WTC11 (cell line): ENCODE measurements at regions of chr20 and their contacts with region 1.

Region 1: GRCh38 chr20:40970201-40970600 is 58.4 kb upstream of the TOP1 start:
- DNase-seq: no peak
- ATAC-seq: peak; percentile 36
- H3K4me3 Mint-ChIP-seq: no peak overlapping the region
- H3K27ac Mint-ChIP-seq: no peak overlapping the region
- H3K4me1 Mint-ChIP-seq: peaks cover 19% of the 10 kb centered on the region
- H3K27me3 Mint-ChIP-seq: peaks cover 12% of the 10 kb centered on the region
- CTCF ChIP-seq: no peak

Region 2: GRCh38 chr20:40010483-40010882 is 959.7 kb before region 1 on chr20:
- CTCF ChIA-PET with region 1: no interaction called
- POLR2A ChIA-PET with region 1: no interaction called
- DNase-seq: no peak
- ATAC-seq: no peak
- H3K4me3 Mint-ChIP-seq: no peak overlapping the region
- H3K27ac Mint-ChIP-seq: no peak overlapping the region
- H3K4me1 Mint-ChIP-seq: no peaks in the 10 kb centered on the region
- H3K27me3 Mint-ChIP-seq: no peaks in the 10 kb centered on the region
- CTCF ChIP-seq: no peak

Region 3: GRCh38 chr20:40982415-40983145 is 12.4 kb after region 1 on chr20:
- CTCF ChIA-PET with region 1: interaction called, 12 read pairs
- POLR2A ChIA-PET with region 1: interaction called, 3 read pairs
- DNase-seq: no peak
- ATAC-seq: no peak
- H3K4me3 Mint-ChIP-seq: no peak overlapping the region
- H3K27ac Mint-ChIP-seq: no peak overlapping the region
- H3K4me1 Mint-ChIP-seq: peaks cover 5% of the 10 kb centered on the region; the same call in 1 of the 2 replicates
- H3K27me3 Mint-ChIP-seq: peaks cover 12% of the 10 kb centered on the region
- CTCF ChIP-seq: no peak

Region 4: GRCh38 chr20:41095110-41095969 is 125.1 kb after region 1 on chr20:
- CTCF ChIA-PET with region 1: interaction called, 18 read pairs
- POLR2A ChIA-PET with region 1: interaction called, 9 read pairs
- DNase-seq: peak; percentile 56
- ATAC-seq: peak; percentile 58
- H3K4me3 Mint-ChIP-seq: no peak overlapping the region
- H3K27ac Mint-ChIP-seq: no peak overlapping the region
- H3K4me1 Mint-ChIP-seq: no peaks in the 10 kb centered on the region
- H3K27me3 Mint-ChIP-seq: no peaks in the 10 kb centered on the region
- CTCF ChIP-seq: peak; percentile 70